Psoas muscle (tissue), 8 donors: ENCODE measurements at regions of chr9 and their contacts with region 1.

Region 1: DNA sequence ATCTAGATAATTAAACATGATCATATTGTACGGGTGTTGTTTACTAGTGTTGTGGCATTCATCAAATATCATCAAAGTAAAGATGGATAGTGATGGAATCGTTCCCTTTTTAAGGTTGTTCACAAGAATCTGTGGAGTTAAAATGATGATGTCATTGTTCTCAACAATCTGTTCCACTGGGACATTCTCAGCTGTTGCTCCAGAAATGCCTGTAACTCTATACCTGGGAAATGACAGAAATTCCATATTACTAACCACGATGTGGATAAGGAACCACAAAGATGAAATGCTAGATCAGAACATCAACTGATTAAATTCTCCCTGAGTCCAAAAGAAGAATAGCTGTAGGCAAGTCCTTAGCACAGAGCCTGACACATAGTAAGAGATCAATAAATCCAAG is 38.0 kb downstream of the RIGI start:
- DNase-seq: no peak
- ATAC-seq: no peak
- H3K4me3 ChIP-seq: no peak overlapping the region
- H3K27ac ChIP-seq: no peak overlapping the region
- H3K4me1 ChIP-seq: no peaks in the 10 kb centered on the region
- H3K27me3 ChIP-seq: no peaks in the 10 kb centered on the region
- CTCF ChIP-seq: no peak

Region 2: DNA sequence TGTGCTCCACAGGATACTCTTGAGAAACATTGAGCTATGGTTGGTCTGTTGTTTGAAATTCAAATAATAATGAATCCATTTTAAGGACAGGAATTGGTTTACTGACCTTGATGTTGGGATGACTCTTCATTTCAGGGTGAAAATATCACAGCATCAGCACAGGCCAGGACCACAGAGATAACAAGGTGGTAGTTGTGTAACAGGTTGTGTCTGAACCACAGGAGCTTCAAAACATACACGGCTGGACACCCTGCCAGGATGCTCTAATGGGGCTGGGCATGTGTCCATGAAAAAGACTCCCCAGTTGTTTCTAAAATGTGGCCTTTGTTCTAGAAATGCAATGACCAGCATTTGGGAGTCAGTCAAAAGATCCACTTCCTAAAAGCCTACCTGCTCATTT is 33.7 kb before region 1 on chr9:
- intact Hi-C with region 1: loop called in 1 of 2 experiments (anchors 5 kb)
- DNase-seq: no peak
- ATAC-seq: no peak
- H3K4me3 ChIP-seq: no peak overlapping the region
- H3K27ac ChIP-seq: no peak overlapping the region
- H3K4me1 ChIP-seq: no peaks in the 10 kb centered on the region
- H3K27me3 ChIP-seq: no peaks in the 10 kb centered on the region
- CTCF ChIP-seq: no peak

Region 3: DNA sequence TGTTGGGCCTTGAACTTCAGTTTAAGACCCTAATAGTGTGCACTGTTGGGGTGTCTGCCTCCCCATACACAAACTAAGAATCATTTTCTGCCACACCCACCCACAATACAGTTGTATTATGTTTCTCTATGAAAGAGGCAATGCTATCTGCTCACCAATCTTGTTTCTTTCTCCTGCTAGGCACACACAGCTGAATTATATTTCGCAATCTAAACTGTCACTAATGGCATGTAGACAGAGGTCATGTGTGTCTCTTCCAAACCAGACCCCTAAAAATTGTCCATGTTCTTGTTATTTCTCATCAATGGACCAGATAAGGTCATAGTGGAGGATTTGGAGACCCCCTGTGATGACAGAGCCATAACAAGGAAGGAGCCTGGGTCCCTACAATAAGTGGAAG is 19.2 kb before region 1 on chr9:
- intact Hi-C with region 1: no loop called
- DNase-seq: no peak
- ATAC-seq: no peak
- H3K4me3 ChIP-seq: no peak overlapping the region
- H3K27ac ChIP-seq: no peak overlapping the region
- H3K4me1 ChIP-seq: no peaks in the 10 kb centered on the region
- H3K27me3 ChIP-seq: no peaks in the 10 kb centered on the region
- CTCF ChIP-seq: no peak

Region 4: DNA sequence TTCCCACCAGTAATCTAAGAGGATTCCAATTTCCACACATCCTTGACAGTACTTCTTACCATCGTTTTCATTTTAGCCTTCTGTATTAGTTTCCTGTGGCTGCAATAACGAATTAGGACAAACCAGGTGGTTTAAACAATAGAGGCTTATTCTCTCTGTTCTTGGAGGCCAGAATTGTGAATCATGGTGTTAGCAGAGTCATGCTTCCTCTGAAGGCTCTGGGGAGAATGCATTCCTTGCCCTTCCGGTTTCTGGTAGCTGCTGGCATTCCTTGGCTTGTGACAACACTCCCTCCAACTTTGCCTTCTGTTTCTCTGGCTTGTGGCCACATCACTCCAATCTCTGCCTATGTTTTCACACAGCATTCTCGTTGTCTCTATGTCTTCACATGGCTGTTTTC is 14.5 kb after region 1 on chr9:
- intact Hi-C with region 1: loop called in 1 of 2 experiments (anchors 2 kb)
- DNase-seq: no peak
- ATAC-seq: no peak
- H3K4me3 ChIP-seq: no peak overlapping the region
- H3K27ac ChIP-seq: no peak overlapping the region
- H3K4me1 ChIP-seq: no peaks in the 10 kb centered on the region
- H3K27me3 ChIP-seq: no peaks in the 10 kb centered on the region
- CTCF ChIP-seq: no peak